Left cardiac atrium (tissue), 4 donors: ENCODE measurements at regions of chr17 and their contacts with region 1.

Region 1: DNA sequence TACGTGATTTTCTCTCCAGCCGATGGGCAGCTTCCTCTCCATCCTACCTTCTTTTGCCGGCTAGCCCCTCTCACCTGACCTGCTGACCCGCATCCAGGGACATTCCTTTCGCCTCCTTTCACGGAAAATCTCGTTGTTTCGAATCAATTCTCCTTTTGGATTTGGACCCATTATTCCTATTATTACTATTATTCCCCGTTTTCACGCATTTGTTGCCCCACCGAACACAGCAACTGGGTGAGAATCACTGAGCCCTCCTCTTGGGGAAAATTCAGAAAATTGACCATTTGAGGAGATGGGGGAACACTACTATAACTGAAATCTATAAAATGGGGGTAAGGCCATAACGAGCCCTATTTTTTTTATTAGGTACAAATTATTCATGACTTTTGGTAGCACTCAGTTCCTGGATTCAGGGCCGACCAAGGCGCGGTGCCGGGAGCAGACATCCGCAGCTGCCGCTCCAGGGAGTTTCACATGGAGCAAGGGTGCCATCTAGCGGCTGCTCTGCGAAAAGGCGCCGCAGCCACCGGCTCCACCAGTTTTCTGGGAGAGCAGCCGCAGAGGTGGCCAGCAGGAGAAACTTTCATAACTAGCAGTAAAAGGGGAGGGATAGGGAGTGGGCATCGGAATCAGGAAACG is 3.3 kb upstream of the HOXB8 start:
- DNase-seq: peak; percentile 84
- ATAC-seq: peak; percentile 91 to 93

Region 2: DNA sequence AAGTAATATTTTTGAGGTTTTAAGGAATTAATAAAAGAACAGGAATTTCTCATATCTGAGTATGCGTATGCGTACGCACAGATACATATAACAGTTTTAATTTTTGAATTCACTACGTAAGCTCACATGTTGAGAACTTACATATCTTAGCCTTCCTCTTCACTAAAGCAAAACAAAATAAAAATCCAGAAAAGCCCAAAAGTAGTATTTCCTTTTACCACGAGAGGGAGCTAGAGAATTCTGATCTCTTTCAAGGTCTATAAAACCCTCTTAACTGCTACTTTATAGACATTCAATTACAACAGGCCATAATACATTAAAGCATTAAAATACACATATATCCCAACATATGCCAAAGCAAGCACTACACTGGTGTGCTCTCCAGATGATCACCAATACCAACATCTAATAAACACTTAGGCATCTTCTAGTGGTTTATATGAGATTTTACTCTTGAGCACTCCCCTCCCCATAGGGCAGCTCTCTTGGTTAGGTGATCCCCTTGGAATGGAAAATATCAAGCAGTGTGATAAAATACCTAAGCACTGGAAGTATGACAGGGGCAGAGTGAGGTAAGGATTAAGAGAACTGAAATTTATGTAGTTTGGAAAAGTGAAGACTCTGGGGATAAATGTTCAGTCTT is 282.4 kb before region 1 on chr17:
- intact Hi-C with region 1: loop called (anchors 10 kb)
- DNase-seq: no peak
- ATAC-seq: no peak

Region 3: DNA sequence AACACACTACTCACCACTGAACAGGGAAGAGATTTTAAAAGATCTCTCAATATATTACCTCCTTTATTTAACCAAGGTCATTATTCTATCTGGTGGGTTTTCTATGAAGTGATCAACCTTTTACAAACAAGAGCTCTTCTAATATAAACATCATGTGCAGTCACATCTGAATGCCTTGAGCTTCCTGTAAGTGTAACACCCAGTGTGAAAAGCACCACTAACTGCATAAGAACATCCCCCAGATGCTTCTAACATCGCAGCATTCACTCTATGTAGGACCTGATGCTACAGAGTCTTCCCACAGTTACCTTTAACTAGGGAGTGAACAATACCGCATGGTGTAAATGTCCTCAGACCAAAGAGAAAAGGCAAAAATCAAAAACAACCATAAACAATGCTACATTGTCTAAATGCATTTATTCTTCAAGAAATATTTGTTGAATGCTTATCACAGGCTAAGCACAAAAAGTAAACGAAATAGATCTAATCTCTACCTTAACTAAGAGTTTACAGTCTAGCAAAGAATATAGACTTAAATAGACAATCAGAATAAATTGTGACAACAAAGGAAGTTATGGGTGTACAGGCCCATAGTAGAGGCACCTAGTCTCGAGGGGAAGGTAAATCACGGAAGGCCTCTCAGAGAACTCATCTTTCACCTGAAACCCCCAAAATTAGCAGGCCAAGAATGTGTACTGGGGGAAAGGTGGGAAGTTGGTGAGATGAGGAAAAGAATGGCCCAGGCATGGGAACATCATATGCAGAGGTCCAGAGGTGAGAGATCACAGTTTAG is 204.6 kb before region 1 on chr17:
- intact Hi-C with region 1: no loop called
- DNase-seq: no peak
- ATAC-seq: no peak